Mammary epithelial cell (primary cell): ENCODE measurements at regions of chr10 and their contacts with region 1.

Region 1: DNA sequence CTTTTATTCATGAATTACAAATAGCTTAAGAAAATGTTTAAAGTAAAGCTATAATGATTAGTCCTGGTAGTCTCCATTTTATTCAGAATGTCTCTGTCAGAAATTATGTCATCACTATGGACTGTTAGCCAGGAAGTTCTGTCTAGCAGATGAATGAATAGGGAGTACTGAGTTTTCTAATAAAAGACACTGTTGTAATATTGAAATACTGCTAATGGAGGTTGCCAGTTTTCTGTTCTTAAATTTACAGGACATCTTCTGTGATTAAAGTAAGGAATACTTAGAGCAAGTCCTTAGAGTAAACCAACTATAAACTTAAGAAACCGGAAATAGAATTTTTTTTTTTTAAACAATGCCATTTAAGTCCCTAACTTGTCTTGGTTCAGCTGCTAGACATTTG is 309.8 kb downstream of the ADK start:
- DNase-seq: no peak
- H3K4me3 ChIP-seq: no peak overlapping the region
- H3K27ac ChIP-seq: no peak overlapping the region
- H3K4me1 ChIP-seq: no peaks in the 10 kb centered on the region
- H3K27me3 ChIP-seq: no peaks in the 10 kb centered on the region
- CTCF ChIP-seq: no peak

Region 2: GRCh38 chr10:74314166-74314565 is 146.6 kb before region 1 on chr10:
- CTCF ChIA-PET with region 1: no interaction called
- dilution Hi-C with region 1: no loop called
- in situ Hi-C with region 1: no loop called
- intact Hi-C with region 1: no loop called
- DNase-seq: no peak
- H3K4me3 ChIP-seq: peak overlapping the region in 1 of 3 experiments; percentile 14
- H3K27ac ChIP-seq: no peak overlapping the region
- H3K4me1 ChIP-seq: no peaks in the 10 kb centered on the region
- H3K27me3 ChIP-seq: no peaks in the 10 kb centered on the region
- CTCF ChIP-seq: no peak

Region 3: GRCh38 chr10:74808501-74808900 is 347.7 kb after region 1 on chr10:
- CTCF ChIA-PET with region 1: no interaction called
- dilution Hi-C with region 1: no loop called
- in situ Hi-C with region 1: no loop called
- intact Hi-C with region 1: no loop called
- DNase-seq: no peak
- H3K4me3 ChIP-seq: no peak overlapping the region
- H3K27ac ChIP-seq: no peak overlapping the region
- H3K4me1 ChIP-seq: no peaks in the 10 kb centered on the region
- H3K27me3 ChIP-seq: no peaks in the 10 kb centered on the region
- CTCF ChIP-seq: no peak

Region 4: DNA sequence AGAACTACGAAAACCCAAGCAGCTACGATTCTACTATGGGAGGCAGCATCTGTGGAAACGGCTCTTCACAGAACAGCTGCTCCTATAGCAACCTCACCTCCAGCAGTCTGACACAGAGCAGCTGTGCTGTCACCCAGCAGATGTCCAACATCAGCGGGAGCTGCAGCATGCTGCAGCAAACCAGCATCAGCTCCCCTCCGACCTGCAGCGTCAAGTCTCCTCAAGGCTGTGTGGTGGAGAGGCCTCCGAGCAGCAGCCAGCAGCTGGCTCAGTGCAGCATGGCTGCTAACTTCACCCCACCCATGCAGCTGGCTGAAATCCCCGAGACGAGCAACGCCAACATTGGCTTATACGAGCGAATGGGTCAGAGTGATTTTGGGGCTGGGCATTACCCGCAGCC is 569.0 kb after region 1 on chr10:
- CTCF ChIA-PET with region 1: no interaction called
- dilution Hi-C with region 1: loop called (anchors 10 kb)
- in situ Hi-C with region 1: no loop called
- intact Hi-C with region 1: no loop called
- DNase-seq: no peak
- H3K4me3 ChIP-seq: no peak overlapping the region
- H3K27ac ChIP-seq: no peak overlapping the region
- H3K4me1 ChIP-seq: no peaks in the 10 kb centered on the region
- H3K27me3 ChIP-seq: no peaks in the 10 kb centered on the region
- CTCF ChIP-seq: no peak